ENCODE measurements at regions of chr6 and their contacts with region 1.

Region 1: DNA sequence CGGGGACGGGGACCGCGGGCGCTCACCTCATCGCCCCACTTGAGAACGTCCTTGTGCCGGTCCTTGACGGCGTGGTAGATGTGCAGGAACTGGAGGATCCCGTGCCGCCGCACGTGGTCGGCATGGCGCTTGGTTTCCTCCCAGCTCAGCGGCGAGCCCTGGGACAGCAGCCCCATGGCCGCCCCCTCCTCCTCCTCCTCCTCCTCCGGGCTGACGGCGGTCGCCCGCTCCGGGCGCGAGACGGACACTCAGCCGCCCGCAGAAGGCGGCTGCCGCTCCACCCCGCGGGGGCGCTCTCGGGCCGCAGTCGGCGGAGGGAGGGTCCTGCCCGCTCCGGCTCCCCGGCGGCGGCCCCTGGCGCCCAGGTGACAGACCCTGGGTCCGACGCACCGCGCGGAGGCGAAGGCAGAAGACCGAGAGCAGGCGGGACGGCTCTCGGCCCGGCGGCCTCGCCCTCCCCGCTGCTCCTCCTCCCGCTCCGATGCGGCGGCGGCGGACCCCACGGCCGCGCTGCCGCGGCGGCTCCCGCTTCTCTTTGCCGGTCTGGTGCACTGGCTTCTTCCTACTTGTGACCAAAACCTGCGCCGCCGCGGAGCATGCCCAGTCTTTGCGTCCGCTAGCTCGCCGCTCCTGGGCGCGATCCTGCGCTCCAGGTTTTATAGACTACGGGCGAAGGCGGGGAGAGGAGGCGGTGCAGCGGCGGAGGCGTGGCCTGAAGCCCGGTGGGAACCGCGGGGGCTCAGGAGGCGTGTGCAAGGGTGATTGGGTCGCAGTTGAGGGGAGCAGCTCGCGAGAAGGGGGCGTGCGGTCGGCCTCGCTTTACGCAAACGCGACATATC is at the start of gene GCLC:
- DNase-seq: peak; percentile 89
- ATAC-seq: peak; percentile 66
- H3K4me3 Mint-ChIP-seq: peak within 1 kb of the TSS; percentile 97
- H3K27ac Mint-ChIP-seq: peak within 1 kb of the TSS; percentile 88
- H3K4me1 Mint-ChIP-seq: peaks cover 39% of the 10 kb centered on the region
- H3K27me3 Mint-ChIP-seq: peaks cover 12% of the 10 kb centered on the region
- total RNA-seq, gene GCLC: 32.2 to 33.7 TPM

Region 2: GRCh38 chr6:53651764-53652401 is 107.2 kb after region 1 on chr6:
- POLR2A ChIA-PET with region 1: interaction called, 10 read pairs
- DNase-seq: peak; percentile 81
- ATAC-seq: peak; percentile 92
- H3K4me3 Mint-ChIP-seq: peak overlapping the region; percentile 84
- H3K27ac Mint-ChIP-seq: peak overlapping the region; percentile 88
- H3K4me1 Mint-ChIP-seq: peaks cover 26% of the 10 kb centered on the region
- H3K27me3 Mint-ChIP-seq: peaks cover 7% of the 10 kb centered on the region

Measured in activated naive CD8-positive, alpha-beta T cell treated with anti-CD3 and anti-CD28 coated beads, Interleukin-2, amount 10 ng/mL, durations not matched to agents 7 days and 5 days (primary cell).